Posterior cingulate gyrus (tissue), 11 donors: ENCODE measurements at regions of chr6 and their contacts with region 1.

Region 1: GRCh38 chr6:158819213-158819909 is at the start of gene EZR:
- DNase-seq: peak in 4 of 10 donors; percentile 19 to 39 (median 36)

Region 2: DNA sequence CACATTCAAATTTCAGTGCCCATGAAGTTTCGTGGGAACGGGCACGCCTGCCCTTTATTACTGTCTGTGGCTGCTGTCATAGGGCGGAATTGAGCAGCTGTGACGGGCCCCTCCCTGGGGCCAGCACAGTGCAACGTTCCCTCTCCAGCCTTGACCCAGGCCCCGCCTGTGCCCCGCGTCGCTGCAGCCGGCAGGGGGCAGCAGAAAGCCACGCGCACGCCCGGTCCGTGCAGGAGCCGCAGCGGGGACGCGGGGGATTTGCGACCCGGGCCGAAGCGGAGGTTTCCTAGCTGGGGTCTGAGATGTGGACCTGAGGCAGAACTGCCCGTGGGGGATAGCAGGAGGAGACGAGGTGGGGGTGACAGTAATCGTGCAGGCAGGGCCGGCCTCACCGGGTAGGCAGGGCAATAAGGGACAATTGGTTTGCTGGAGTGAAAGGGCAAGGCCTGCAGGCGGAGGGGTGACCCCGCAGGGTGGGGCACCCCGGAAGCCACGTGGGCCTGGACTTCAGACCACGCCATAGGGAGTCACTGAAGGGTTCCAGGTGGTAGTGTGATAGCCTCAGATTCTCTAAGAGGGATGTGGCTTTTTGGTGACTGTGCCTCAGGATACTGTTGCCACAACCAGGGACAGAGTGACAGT is 115.1 kb before region 1 on chr6:
- intact Hi-C with region 1: loop called (anchors 1 kb)
- DNase-seq: peak; percentile 47 to 96 (median 76)

Region 3: DNA sequence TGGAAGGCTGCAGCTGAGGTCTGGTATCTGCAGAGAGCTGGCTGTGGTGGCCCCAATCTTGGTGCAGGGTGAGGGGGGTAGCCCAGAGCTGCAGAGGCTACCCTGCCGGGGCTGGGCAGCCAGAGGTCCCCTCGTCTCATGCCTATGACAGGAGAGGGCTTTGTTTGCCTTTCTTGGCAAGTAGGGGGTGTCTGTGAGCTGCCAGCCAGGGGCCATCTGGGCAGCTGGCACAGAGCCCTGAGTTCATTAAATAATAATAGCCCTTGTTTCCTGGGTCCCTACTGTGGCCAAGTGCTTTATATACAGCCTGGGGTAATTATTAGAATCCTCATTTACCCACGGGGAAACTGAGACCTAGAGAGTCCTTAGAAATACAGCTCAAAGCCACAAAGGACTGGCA is 66.7 kb before region 1 on chr6:
- intact Hi-C with region 1: loop called (anchors 10 kb)
- DNase-seq: peak; percentile 72 to 98 (median 80)